Posterior vena cava (tissue), 2 donors: ENCODE measurements at regions of chr3 and their contacts with region 1.

Region 1: DNA sequence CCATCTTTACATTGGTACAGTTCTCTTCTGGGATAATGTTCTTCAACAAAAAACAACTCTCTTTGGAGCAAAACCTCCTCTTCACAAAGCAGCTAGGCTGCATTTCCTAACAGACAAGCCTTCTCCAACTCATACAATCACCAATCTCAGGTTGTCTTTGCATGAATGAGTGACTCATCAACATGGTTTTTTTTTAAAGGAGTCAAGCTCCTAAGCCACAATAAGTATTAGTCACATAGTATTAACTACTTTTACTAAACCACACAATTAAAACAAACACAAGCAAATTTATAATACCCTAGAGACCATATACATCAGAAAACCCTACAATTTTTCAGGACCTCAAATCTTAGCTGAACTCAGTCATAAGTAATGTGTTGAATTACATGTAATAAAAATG is 137.4 kb downstream of the TBC1D5 start:
- DNase-seq: no peak

Region 2: DNA sequence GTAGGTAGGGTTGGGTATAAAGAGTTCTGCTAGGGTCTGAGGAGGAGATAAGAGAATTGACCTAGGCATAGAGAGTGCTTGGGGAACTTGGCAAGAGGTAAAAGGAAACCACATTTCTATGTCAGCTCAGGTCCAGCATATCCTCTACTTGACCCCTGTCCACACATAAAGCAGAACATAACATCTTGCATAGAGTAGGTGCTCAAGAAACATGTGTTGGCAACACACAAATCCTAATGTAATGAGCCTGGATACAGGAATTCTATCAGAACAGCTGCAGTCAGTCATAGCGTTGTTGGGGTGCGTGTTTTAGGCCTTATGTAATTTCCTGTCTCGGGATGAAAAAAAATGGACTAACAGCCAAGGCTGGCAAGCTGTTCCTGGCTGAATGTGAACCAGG is 755.2 kb before region 1 on chr3:
- intact Hi-C with region 1: loop called in 1 of 2 experiments (anchors 5 kb)
- DNase-seq: no peak

Region 3: DNA sequence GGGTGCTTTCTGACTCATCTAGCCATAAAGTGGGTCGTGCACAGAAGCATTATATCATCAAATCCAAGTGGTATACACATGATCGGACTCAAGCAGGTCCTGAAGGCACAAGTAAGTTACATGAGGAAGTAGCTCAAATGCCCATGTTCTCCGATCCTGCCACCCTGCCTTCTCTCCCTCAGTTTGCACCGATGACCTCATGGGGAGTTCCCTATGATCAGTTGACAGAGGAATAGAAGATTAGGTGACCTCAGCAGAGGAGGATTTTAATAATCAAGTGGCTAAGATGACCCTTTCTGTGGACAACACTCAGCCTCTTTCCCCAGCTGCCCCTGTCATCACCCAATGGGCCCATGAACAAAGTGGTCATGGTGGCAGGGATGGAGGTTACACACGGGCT is 12.1 kb before region 1 on chr3:
- intact Hi-C with region 1: loop called in 1 of 2 experiments (anchors 1 kb)
- DNase-seq: no peak